AG04449 (cell line): ENCODE measurements at regions of chr6 and their contacts with region 1.

Region 1: GRCh38 chr6:31901953-31902643 is at the start of gene ZBTB12:
- DNase-seq: peak; percentile 80
- H3K4me3 ChIP-seq: peak within 1 kb of the TSS; percentile 73
- CTCF ChIP-seq: no peak

Region 2: GRCh38 chr6:31888276-31889258 is 13.5 kb before region 1 on chr6:
- CTCF ChIA-PET with region 1: interaction called, 24 read pairs
- POLR2A ChIA-PET with region 1: interaction called, 3 read pairs
- DNase-seq: no peak
- H3K4me3 ChIP-seq: no peak overlapping the region
- CTCF ChIP-seq: peak; percentile 83

Region 3: GRCh38 chr6:32177788-32178546 is 275.9 kb after region 1 on chr6 and contains the start of gene RNF5:
- CTCF ChIA-PET with region 1: no interaction called
- POLR2A ChIA-PET with region 1: no interaction called
- DNase-seq: peak; percentile 100
- H3K4me3 ChIP-seq: peak within 1 kb of the TSS; percentile 97
- CTCF ChIP-seq: no peak